ENCODE measurements at regions of chr14 and their contacts with region 1.

Region 1: DNA sequence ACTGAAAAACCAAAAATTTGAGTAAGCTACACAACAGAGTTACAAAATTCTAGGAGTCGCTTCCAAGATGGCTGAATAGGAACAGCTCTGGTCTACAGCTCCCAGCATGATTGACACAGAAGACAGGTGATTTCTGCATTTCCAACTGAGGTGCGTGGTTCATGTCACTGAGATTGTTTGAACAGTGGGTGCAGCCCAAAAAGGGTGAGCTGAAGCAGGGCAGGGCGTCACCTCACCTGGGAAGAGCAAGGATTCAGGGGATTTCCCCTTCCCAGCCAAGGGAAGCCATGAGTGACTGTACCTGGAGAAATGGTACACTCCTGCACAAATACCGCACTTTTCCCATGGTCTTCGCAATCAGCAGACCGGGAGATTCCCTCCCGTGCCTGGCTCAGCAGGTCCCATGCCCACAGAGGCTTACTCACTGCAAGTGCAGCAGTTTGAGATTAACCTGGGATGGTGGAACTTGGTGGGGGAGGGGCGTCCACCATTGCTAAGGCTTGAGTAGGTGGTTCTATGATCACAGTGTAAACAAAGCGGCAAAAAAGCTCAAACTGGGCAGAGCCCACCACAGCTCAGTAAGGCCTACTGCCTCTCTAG is 11.1 kb upstream of the DHRS4 start:
- DNase-seq: no peak
- H3K4me3 ChIP-seq: no peak overlapping the region
- H3K27ac ChIP-seq: no peak overlapping the region
- H3K4me1 ChIP-seq: no peaks in the 10 kb centered on the region
- H3K27me3 ChIP-seq: no peaks in the 10 kb centered on the region
- CTCF ChIP-seq: no peak
- EP300 ChIP-seq: no peak
- RAD21 ChIP-seq: no peak

Region 2: GRCh38 chr14:23953464-23954278 is 11.2 kb after region 1 on chr14 and contains the start of gene DHRS4:
- CTCF ChIA-PET with region 1: interaction called, 10 read pairs
- POLR2A ChIA-PET with region 1: no interaction called
- DNase-seq: peak; percentile 91
- H3K4me3 ChIP-seq: peak within 1 kb of the TSS; percentile 82 to 88
- H3K27ac ChIP-seq: peak within 1 kb of the TSS; percentile 56 to 85
- H3K4me1 ChIP-seq: peaks cover 0 to 5% of the 10 kb centered on the region in 2 experiments; a peak in 1 of 4 replicates
- H3K27me3 ChIP-seq: no peaks in the 10 kb centered on the region
- CTCF ChIP-seq: peak; percentile 94
- EP300 ChIP-seq: no peak; a peak in 1 of 4 replicates
- RAD21 ChIP-seq: peak; percentile 63
- polyA plus RNA-seq, gene DHRS4: 42.3 and 50.5 TPM in 2 replicates